Activated naive CD4-positive, alpha-beta T cell treated with anti-CD3 and anti-CD28 coated beads for 36 hours (primary cell): ENCODE measurements at regions of chr2 and their contacts with region 1.

Region 1: DNA sequence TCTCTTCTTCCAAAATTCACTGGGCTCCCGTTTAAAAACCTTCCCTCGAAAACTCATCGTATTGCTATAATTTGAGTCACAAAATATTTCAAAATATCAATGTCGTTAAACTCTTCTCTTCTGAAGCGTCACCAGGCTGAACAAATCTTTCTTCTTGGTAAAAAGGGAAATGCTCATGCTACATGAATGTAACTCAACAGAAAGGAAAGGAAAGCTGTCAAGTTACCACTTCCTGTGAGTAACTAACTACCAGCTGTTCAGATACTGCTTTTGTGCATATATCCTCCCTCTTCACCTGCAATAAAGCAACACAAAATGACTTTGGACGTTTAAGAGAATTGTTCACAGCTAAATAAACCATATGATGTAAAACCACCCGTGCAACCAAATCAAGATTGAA is 95.4 kb downstream of the DOCK10 start:
- DNase-seq: no peak
- H3K4me3 Mint-ChIP-seq: peak overlapping the region; percentile 82
- H3K27ac Mint-ChIP-seq: peak overlapping the region; percentile 94
- H3K4me1 Mint-ChIP-seq: peaks cover 58% of the 10 kb centered on the region
- H3K27me3 Mint-ChIP-seq: no peaks in the 10 kb centered on the region

Region 2: GRCh38 chr2:224820283-224820991 is 126.5 kb before region 1 on chr2:
- CTCF ChIA-PET with region 1: no interaction called
- intact Hi-C with region 1: no loop called
- DNase-seq: no peak
- H3K4me3 Mint-ChIP-seq: no peak overlapping the region
- H3K27ac Mint-ChIP-seq: no peak overlapping the region
- H3K4me1 Mint-ChIP-seq: peaks cover 3% of the 10 kb centered on the region
- H3K27me3 Mint-ChIP-seq: no peaks in the 10 kb centered on the region

Region 3: GRCh38 chr2:224869601-224870233 is 77.2 kb before region 1 on chr2:
- CTCF ChIA-PET with region 1: no interaction called
- intact Hi-C with region 1: no loop called
- DNase-seq: no peak
- H3K4me3 Mint-ChIP-seq: no peak overlapping the region
- H3K27ac Mint-ChIP-seq: no peak overlapping the region
- H3K4me1 Mint-ChIP-seq: peaks cover 14% of the 10 kb centered on the region
- H3K27me3 Mint-ChIP-seq: no peaks in the 10 kb centered on the region

Region 4: GRCh38 chr2:224885836-224886547 is 60.9 kb before region 1 on chr2:
- CTCF ChIA-PET with region 1: no interaction called
- intact Hi-C with region 1: loop called (anchors 2 kb)
- DNase-seq: no peak
- H3K4me3 Mint-ChIP-seq: no peak overlapping the region
- H3K27ac Mint-ChIP-seq: peak overlapping the region; percentile 81
- H3K4me1 Mint-ChIP-seq: peaks cover 71% of the 10 kb centered on the region
- H3K27me3 Mint-ChIP-seq: no peaks in the 10 kb centered on the region

Region 5: GRCh38 chr2:224904381-224904780 is 42.5 kb before region 1 on chr2:
- CTCF ChIA-PET with region 1: no interaction called
- intact Hi-C with region 1: no loop called
- DNase-seq: no peak
- H3K4me3 Mint-ChIP-seq: no peak overlapping the region
- H3K27ac Mint-ChIP-seq: no peak overlapping the region
- H3K4me1 Mint-ChIP-seq: peaks cover 54% of the 10 kb centered on the region
- H3K27me3 Mint-ChIP-seq: no peaks in the 10 kb centered on the region

Region 6: DNA sequence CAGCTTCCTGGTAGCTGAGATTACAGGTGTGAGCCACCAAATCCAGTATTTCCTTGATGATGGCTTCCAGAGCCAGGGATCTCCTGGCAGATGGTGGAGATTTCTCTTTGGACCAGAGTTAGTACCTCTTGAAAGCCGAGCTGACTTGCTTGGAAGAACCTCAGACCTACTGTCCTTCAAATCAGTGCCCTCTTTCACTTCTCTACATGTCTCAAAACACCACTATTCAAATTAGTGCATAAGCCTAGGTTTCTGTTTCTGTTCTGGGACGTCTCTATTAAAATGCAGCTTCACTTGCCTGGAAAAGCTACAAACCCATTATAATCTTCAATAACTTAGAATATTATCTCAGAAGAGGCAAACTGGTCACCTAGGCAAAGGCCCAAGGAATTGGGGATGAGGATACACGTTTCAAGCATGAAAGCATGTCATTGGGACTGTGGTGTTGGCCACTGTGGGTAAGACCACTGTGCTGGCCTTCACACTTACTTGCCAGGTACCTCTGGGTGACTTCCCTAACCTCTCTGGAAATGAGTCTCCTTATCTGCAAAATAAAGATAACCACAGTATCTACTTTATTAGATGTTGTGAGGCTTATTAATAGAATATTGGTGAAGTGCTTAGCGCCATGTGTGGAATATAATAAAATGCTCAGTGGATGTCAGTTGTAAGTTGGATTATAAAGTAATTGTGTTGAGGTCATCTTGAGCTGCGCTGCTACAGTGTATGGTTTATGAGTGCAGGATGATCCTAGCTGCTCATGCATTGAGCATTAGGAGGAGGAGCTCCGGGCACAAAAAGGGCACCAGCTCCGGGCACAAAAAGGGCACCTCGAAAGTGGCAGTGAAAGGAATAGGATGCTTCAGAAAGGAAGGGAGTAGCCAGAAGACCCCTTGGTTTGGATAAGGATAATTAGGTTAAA is 10.9 kb after region 1 on chr2:
- CTCF ChIA-PET with region 1: interaction called, 3 read pairs
- intact Hi-C with region 1: loop called (anchors 1 kb)
- DNase-seq: no peak
- H3K4me3 Mint-ChIP-seq: no peak overlapping the region
- H3K27ac Mint-ChIP-seq: peak overlapping the region; percentile 54
- H3K4me1 Mint-ChIP-seq: peaks cover 84% of the 10 kb centered on the region
- H3K27me3 Mint-ChIP-seq: no peaks in the 10 kb centered on the region

Region 7: DNA sequence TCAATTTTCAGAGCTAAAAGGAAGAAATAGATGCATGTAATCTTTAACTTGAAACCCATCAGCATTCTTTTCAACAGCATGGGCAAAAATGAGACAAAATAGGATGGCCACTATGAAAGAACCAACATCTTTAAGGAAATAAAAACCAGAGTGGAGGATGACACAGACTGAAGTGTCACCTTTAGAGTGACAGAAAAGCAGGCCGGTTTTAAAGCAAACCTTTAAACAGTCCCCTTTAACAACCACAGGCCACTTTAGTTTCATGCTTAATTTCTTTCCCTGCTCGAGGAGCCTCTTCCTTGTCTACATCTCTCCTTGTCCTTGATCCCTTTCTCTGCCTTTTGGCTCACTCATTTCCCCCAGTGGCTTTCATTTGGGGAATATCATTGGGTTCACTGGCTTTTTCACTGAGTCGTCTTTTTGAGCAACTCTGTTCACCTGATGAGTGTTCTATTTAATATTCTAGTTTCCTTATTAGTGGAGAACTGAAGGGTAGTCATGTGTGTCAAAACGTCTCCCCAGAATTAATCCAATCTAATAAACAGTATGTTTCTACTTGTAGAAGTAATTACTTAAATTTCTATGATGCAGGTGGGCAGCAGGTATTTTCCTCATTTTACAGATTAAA is 22.9 kb after region 1 on chr2:
- CTCF ChIA-PET with region 1: interaction called, 3 read pairs
- intact Hi-C with region 1: loop called (anchors 1 kb)
- DNase-seq: no peak
- H3K4me3 Mint-ChIP-seq: no peak overlapping the region
- H3K27ac Mint-ChIP-seq: peak overlapping the region; percentile 79
- H3K4me1 Mint-ChIP-seq: peaks cover 65% of the 10 kb centered on the region
- H3K27me3 Mint-ChIP-seq: no peaks in the 10 kb centered on the region

Region 8: GRCh38 chr2:224982910-224983711 is 36.2 kb after region 1 on chr2:
- CTCF ChIA-PET with region 1: interaction called, 8 read pairs
- intact Hi-C with region 1: loop called (anchors 1 kb)
- DNase-seq: peak; percentile 61
- H3K4me3 Mint-ChIP-seq: peak overlapping the region; percentile 56
- H3K27ac Mint-ChIP-seq: peak overlapping the region; percentile 90
- H3K4me1 Mint-ChIP-seq: peaks cover 69% of the 10 kb centered on the region
- H3K27me3 Mint-ChIP-seq: no peaks in the 10 kb centered on the region